Left cardiac atrium (tissue), 4 donors: ENCODE measurements at regions of chr6 and their contacts with region 1.

Region 1: GRCh38 chr6:68876792-68877493 is 241.9 kb downstream of the ADGRB3 start:
- DNase-seq: no peak
- ATAC-seq: no peak

Region 2: DNA sequence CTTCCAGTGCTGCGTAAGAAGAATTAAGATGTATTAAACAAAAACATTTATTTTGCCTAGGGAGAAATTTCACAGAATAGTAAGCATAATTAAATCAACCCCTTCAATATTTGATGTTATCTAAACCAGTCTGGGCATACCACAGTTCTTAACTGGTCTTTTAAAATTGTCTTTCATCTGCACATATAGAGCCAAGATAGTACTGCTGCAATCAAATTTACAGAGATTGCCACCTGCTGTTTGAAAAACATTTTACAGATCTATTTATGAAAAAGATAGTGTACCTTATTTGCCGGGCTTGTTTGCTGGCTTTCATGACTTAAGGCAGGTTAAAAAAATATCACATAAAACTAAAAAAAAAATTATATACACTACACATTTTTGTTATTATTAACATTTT is 81.4 kb after region 1 on chr6:
- intact Hi-C with region 1: loop called in 1 of 2 experiments (anchors 5 kb)
- DNase-seq: no peak
- ATAC-seq: no peak

Region 3: DNA sequence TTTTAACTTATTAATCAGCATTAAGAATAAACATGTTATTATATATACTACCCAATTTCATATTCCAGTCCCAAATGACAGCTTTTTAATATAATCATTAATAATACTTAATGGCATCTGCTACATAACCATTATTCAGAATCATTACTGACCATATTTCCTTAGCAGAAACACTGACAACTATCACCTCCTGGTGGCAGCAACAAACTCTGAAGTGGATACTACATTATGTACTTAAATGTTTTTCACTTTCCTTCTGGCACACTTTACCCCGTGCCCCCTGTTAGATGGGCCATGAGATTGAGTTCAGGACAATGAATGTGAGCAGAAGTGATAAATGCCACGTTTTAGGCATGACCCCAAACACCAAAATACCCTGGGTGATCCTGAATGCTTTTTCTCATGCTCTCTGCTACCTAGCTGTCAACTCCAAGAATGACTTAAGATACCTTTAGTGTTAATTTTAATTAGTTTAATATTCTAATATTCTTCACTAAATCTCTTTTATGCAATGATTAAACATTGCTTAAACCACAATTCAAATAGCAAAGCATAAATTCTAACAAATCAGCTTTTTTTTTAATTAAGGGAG is 842.8 kb after region 1 on chr6:
- intact Hi-C with region 1: loop called in 1 of 2 experiments (anchors 10 kb)
- DNase-seq: no peak
- ATAC-seq: no peak